ENCODE measurements at regions of chr16 and their contacts with region 1.

Region 1: GRCh38 chr16:66751303-66751991 is at the start of gene DYNC1LI2:
- DNase-seq: no peak
- H3K4me3 ChIP-seq: peak within 1 kb of the TSS; percentile 93
- CTCF ChIP-seq: peak; percentile 74

Region 2: DNA sequence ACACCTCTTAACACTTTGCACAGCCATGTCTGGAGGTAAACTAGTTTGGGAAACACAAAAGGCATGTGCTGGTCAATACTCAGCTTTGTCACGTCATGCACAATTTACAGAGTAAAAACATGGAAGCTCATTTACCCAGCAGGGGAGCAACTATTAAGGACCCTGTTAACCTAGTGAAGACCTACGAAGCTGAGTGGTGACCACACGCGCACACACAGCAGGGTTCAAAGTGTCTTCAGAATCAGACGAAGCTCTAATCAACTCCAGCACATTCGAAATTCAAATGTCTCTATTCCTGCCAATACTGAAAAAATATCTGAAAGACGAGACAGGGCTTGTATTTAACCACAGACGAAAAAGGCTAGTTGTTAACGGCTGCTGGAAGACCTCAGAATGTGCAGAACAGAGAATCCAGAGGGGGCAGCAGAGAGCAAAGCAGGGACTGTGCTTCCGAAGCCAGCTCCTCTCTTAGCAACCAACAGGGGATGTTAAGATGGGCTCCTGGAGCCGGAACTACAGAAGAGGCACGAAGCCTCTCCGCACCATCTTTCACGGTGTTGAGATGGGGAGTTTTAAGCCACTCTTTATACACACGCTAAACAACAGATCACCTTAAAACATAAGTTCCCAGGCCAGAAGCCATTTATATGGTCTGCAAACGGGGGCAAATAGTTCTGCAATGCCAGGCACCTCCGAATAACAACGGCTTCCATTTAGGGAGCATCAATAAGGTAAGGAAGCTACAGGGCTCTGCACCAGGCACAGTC is 100.6 kb before region 1 on chr16:
- CTCF ChIA-PET with region 1: interaction called, 13 read pairs
- POLR2A ChIA-PET with region 1: no interaction called
- DNase-seq: peak; percentile 12
- H3K4me3 ChIP-seq: peak overlapping the region; percentile 0; the same call in 1 of the 2 replicates
- CTCF ChIP-seq: peak; percentile 90

Region 3: GRCh38 chr16:66728117-66728787 is 23.2 kb before region 1 on chr16:
- CTCF ChIA-PET with region 1: interaction called, 501 read pairs
- POLR2A ChIA-PET with region 1: no interaction called
- DNase-seq: no peak
- H3K4me3 ChIP-seq: no peak overlapping the region
- CTCF ChIP-seq: peak; percentile 51

Region 4: DNA sequence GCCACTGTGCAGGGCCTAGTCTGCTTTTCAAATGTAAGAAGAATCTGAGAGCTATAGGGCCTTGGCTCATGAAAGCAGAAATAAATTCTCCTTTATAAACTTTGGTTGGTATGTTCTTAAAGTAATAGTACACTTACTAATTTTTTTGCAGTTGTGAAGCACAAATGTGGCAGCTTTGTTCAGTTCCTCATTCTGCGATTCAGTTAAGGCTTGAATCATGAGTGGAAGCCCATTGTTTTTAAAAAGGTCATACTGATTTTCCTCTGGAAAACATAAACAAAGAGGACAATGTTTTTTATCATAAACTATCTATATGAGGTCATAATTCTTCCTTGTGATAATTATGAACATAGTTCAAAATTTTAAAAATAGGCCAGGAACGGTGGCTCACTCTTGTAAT is 23.5 kb after region 1 on chr16:
- CTCF ChIA-PET with region 1: interaction called, 25 read pairs
- POLR2A ChIA-PET with region 1: no interaction called
- DNase-seq: no peak
- H3K4me3 ChIP-seq: no peak overlapping the region
- CTCF ChIP-seq: no peak

Region 5: GRCh38 chr16:66824006-66824405 is 72.6 kb after region 1 on chr16:
- CTCF ChIA-PET with region 1: interaction called, 26 read pairs
- POLR2A ChIA-PET with region 1: no interaction called
- DNase-seq: no peak
- H3K4me3 ChIP-seq: no peak overlapping the region
- CTCF ChIP-seq: no peak

Measured in AG04449 (cell line).